MCF 10A (cell line): ENCODE measurements at regions of chr11 and their contacts with region 1.

Region 1: DNA sequence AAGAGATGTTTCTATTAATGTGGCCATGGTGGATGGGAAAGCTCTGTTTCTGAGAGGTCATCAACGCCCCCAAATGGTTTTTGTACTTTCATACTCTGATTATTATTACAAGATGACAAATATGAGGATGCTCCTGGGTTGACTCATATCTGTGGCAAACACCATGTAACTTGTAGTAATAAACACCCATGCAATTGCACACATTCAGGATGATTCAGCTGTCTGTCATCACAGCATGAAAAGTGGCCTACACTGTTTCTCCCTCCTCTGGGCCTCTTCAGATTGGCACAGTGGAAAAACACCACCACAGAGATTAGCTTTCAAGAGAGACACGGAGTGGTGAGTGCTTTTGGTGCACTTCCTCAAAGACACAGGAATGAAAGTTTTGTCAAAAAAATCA is 85.4 kb downstream of the MTNR1B start:
- DNase-seq: peak; percentile 98
- H3K4me3 Mint-ChIP-seq: peak overlapping the region; percentile 1
- H3K27ac Mint-ChIP-seq: peak overlapping the region; percentile 93
- H3K4me1 Mint-ChIP-seq: peaks cover 33% of the 10 kb centered on the region
- H3K27me3 Mint-ChIP-seq: no peaks in the 10 kb centered on the region
- CTCF ChIP-seq: no peak

Region 2: GRCh38 chr11:92955860-92956259 is 99.0 kb before region 1 on chr11:
- CTCF ChIA-PET with region 1: no interaction called
- POLR2A ChIA-PET with region 1: interaction called, 12 read pairs
- intact Hi-C with region 1: no loop called
- DNase-seq: peak; percentile 68
- H3K4me3 Mint-ChIP-seq: no peak overlapping the region
- H3K27ac Mint-ChIP-seq: no peak overlapping the region
- H3K4me1 Mint-ChIP-seq: peaks cover 7% of the 10 kb centered on the region
- H3K27me3 Mint-ChIP-seq: no peaks in the 10 kb centered on the region
- CTCF ChIP-seq: no peak

Region 3: GRCh38 chr11:93000511-93001476 is 54.1 kb before region 1 on chr11:
- CTCF ChIA-PET with region 1: interaction called, 3 read pairs
- POLR2A ChIA-PET with region 1: interaction called, 9 read pairs
- intact Hi-C with region 1: loop called (anchors 2 kb)
- DNase-seq: peak; percentile 94
- H3K4me3 Mint-ChIP-seq: peak overlapping the region; percentile 38
- H3K27ac Mint-ChIP-seq: peak overlapping the region; percentile 99
- H3K4me1 Mint-ChIP-seq: peaks cover 28% of the 10 kb centered on the region
- H3K27me3 Mint-ChIP-seq: no peaks in the 10 kb centered on the region
- CTCF ChIP-seq: no peak

Region 4: DNA sequence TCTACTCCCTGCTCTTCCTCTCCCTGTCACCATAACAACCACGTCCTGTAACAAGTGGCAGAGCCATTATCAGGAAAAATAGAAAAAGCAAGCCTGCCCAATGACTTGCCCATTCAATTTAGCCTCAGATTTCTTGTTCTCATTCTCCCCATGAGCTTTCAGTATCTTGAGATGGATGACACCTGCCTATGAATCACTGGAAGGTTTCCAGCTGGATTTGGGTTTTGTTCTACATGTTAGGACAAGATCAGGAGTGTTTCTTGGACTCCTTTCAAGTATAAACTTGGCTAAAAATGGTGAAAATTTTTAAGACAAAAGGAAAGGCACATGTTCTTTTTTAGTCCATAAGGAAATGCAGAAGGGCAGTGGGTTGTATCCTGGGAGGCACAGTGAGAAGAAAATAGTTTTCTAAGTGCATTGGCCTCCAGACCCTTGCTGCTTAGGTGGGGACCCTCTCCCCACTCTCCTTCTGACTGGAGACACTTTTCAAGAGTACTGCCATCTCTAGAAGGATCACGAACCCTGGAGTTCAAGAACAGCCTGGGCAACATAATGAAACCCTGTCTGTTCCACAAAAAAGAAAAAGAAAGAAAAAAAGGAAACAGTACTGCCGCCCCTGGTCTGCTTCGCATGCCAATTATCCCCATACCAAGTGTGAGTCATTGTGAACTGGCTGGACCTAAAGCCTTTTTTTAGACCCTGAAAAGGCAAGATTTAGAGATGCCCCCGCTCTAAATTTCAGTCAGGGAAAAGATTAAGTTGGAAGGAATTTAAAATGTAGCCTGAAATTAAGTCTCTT is 34.4 kb before region 1 on chr11:
- CTCF ChIA-PET with region 1: interaction called, 6 read pairs
- POLR2A ChIA-PET with region 1: interaction called, 11 read pairs
- intact Hi-C with region 1: loop called (anchors 1 kb)
- DNase-seq: peak; percentile 99
- H3K4me3 Mint-ChIP-seq: peak overlapping the region; percentile 55
- H3K27ac Mint-ChIP-seq: peak overlapping the region; percentile 88
- H3K4me1 Mint-ChIP-seq: peaks cover 46% of the 10 kb centered on the region
- H3K27me3 Mint-ChIP-seq: no peaks in the 10 kb centered on the region
- CTCF ChIP-seq: no peak

Region 5: DNA sequence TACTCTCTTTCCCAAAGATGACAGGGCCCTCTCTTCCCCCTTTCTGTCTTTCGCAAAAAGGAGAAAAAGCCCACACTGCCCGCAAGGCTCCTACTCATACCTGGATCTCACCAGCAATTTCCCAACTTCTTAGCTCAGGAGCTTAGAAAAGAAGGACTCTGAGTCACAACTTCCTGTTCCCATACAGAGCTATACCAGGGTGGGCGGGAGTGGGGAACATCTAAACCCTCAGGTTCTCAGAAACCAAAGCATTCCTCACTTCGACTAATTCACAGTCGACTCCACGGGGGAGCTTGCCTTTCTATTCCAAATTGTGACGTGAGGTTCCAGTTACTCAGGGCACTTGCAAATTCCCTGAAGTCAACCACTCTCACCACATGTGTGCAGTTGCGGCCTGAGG is 23.5 kb before region 1 on chr11:
- CTCF ChIA-PET with region 1: interaction called, 15 read pairs
- POLR2A ChIA-PET with region 1: interaction called, 15 read pairs
- intact Hi-C with region 1: no loop called
- DNase-seq: peak; percentile 99
- H3K4me3 Mint-ChIP-seq: peak overlapping the region; percentile 22
- H3K27ac Mint-ChIP-seq: peak overlapping the region; percentile 89
- H3K4me1 Mint-ChIP-seq: peaks cover 10% of the 10 kb centered on the region
- H3K27me3 Mint-ChIP-seq: no peaks in the 10 kb centered on the region
- CTCF ChIP-seq: no peak

Region 6: GRCh38 chr11:93131709-93132108 is 76.8 kb after region 1 on chr11:
- CTCF ChIA-PET with region 1: no interaction called
- POLR2A ChIA-PET with region 1: no interaction called
- intact Hi-C with region 1: no loop called
- DNase-seq: peak; percentile 31
- H3K4me3 Mint-ChIP-seq: no peak overlapping the region
- H3K27ac Mint-ChIP-seq: no peak overlapping the region
- H3K4me1 Mint-ChIP-seq: no peaks in the 10 kb centered on the region
- H3K27me3 Mint-ChIP-seq: no peaks in the 10 kb centered on the region
- CTCF ChIP-seq: no peak

Region 7: GRCh38 chr11:93169950-93170561 is 115.2 kb after region 1 on chr11:
- CTCF ChIA-PET with region 1: no interaction called
- POLR2A ChIA-PET with region 1: no interaction called
- intact Hi-C with region 1: loop called (anchors 2 kb)
- DNase-seq: peak; percentile 63
- H3K4me3 Mint-ChIP-seq: no peak overlapping the region
- H3K27ac Mint-ChIP-seq: no peak overlapping the region
- H3K4me1 Mint-ChIP-seq: no peaks in the 10 kb centered on the region
- H3K27me3 Mint-ChIP-seq: no peaks in the 10 kb centered on the region
- CTCF ChIP-seq: peak; percentile 44

Region 8: DNA sequence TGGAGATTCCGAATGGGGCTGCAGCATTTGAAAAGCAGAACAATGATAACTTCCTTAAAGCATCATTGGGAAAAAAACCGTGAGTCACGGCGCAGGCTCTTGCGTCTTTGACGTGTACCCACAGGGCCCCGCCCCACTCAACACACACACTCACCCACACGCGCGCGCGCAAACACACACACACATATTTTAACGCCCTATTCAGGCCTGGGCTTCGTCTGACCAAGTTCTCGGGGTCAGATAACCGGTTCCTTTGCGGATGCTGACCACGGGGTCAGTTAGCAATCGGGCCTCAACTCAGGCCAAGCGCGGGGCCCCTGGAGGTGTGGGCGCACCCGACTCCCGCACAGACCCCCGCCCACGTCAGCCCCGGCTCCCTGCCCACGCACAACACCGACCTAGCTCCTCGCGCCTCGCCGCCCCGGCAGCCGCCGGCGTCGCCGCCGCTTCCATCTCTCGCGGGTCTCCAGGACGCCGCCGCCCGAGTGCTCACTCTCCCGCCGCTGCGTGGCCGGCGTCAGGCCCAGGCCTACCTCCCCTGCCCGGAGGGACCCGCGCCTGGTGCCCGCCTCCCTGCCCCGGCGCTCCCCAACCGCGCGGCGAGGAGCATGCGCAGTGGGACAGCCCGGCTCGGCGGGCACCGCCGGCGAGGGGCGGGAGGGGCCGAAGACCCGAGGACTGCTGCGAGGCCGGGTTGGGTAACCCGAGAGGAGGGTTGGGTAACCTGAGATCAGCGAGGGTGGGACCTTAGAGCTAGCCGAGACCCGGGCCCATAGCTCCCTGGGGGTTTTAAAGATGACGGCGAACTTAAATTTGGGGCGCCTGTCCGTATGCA is 142.7 kb after region 1 on chr11 and contains the start of gene SLC36A4:
- CTCF ChIA-PET with region 1: no interaction called
- POLR2A ChIA-PET with region 1: interaction called, 8 read pairs
- intact Hi-C with region 1: loop called (anchors 10 kb)
- DNase-seq: peak; percentile 95
- H3K4me3 Mint-ChIP-seq: peak within 1 kb of the TSS; percentile 94
- H3K27ac Mint-ChIP-seq: peak within 1 kb of the TSS; percentile 97
- H3K4me1 Mint-ChIP-seq: peaks cover 22% of the 10 kb centered on the region
- H3K27me3 Mint-ChIP-seq: peaks cover 21% of the 10 kb centered on the region
- CTCF ChIP-seq: no peak
- total RNA-seq, gene SLC36A4: 23.4 and 30.1 TPM in 2 replicates

Region 9: GRCh38 chr11:93407777-93408401 is 353.0 kb after region 1 on chr11:
- CTCF ChIA-PET with region 1: no interaction called
- POLR2A ChIA-PET with region 1: no interaction called
- intact Hi-C with region 1: no loop called
- DNase-seq: peak; percentile 74
- H3K4me3 Mint-ChIP-seq: no peak overlapping the region
- H3K27ac Mint-ChIP-seq: no peak overlapping the region
- H3K4me1 Mint-ChIP-seq: no peaks in the 10 kb centered on the region
- H3K27me3 Mint-ChIP-seq: no peaks in the 10 kb centered on the region
- CTCF ChIP-seq: no peak